SK-N-SH (cell line): ENCODE measurements at regions of chr5 and their contacts with region 1.

Region 1: GRCh38 chr5:34898258-34898895 is 16.9 kb downstream of the RAD1 start:
- DNase-seq: peak; percentile 53
- H3K4me3 ChIP-seq: no peak overlapping the region; a peak in 1 of 4 replicates
- H3K27ac ChIP-seq: 0 out of 4 replicates have a peak overlapping the region, but pooled peaks of 1 of the 2 experiments have one; percentile 15
- H3K4me1 ChIP-seq: 0 out of 4 replicates have a peak, but pooled peaks cover 0 to 7% of the 10 kb centered on the region in 2 experiments
- H3K27me3 ChIP-seq: no peaks in the 10 kb centered on the region
- CTCF ChIP-seq: peak; percentile 88
- EP300 ChIP-seq: no peak
- RAD21 ChIP-seq: peak; percentile 85

Region 2: GRCh38 chr5:34474573-34475021 is 423.8 kb before region 1 on chr5:
- CTCF ChIA-PET with region 1: interaction called, 18 read pairs
- POLR2A ChIA-PET with region 1: no interaction called
- DNase-seq: peak; percentile 53
- H3K4me3 ChIP-seq: no peak overlapping the region
- H3K27ac ChIP-seq: no peak overlapping the region
- H3K4me1 ChIP-seq: no peaks in the 10 kb centered on the region
- H3K27me3 ChIP-seq: no peaks in the 10 kb centered on the region
- CTCF ChIP-seq: peak; percentile 98
- EP300 ChIP-seq: no peak
- RAD21 ChIP-seq: peak; percentile 81

Region 3: GRCh38 chr5:34486160-34486848 is 412.1 kb before region 1 on chr5:
- CTCF ChIA-PET with region 1: interaction called, 40 read pairs
- POLR2A ChIA-PET with region 1: no interaction called
- DNase-seq: peak; percentile 70
- H3K4me3 ChIP-seq: peak overlapping the region in 1 of 2 experiments; percentile 33; a peak in 1 of 4 replicates
- H3K27ac ChIP-seq: peak overlapping the region in 1 of 2 experiments; percentile 97; a peak in 2 of 4 replicates
- H3K4me1 ChIP-seq: peaks cover 0 to 21% of the 10 kb centered on the region in 2 experiments
- H3K27me3 ChIP-seq: no peaks in the 10 kb centered on the region
- CTCF ChIP-seq: peak; percentile 90
- EP300 ChIP-seq: no peak
- RAD21 ChIP-seq: peak; percentile 84

Region 4: DNA sequence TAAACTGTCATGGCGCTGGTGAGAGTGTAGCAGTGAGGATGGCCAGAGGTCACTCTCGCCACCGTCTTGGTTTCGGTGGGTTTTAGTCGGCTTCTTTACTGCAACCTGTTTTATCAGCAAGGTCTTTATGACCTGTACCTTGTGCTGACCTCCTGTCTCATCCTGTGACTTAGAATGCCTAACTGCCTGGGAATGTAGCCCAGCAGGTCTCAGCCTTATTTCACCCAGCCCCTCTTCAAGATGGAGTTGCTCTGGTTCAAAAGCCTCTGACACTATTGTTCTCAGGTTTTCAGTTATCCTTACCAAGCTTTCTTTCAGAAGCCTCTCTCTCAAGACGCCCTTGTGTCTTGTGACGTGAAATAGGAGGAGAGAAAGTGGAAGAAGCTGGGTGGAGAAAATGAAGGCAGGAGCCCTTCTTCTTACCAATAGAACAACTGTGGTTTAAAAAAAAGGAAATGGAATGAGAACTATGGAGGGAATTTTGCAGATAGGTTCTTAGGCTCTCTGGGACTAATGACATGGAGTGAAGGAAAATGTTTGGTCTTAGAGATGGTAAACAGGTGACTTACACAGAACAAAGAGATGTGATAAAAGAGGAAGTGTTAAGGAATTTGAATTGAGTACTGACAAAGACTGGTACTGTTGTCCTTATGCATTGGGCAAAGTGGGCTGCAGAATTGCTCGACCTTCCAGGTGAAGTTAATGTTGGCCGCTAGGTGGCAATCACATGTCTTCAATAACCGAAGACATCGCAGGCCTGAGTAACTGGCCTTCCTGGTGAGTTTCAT is 375.6 kb before region 1 on chr5:
- CTCF ChIA-PET with region 1: interaction called, 87 read pairs
- POLR2A ChIA-PET with region 1: no interaction called
- DNase-seq: peak; percentile 64
- H3K4me3 ChIP-seq: peak overlapping the region in 1 of 2 experiments; percentile 29; a peak in 1 of 4 replicates
- H3K27ac ChIP-seq: peak overlapping the region in 1 of 2 experiments; percentile 79; a peak in 3 of 4 replicates
- H3K4me1 ChIP-seq: peaks cover 0 to 17% of the 10 kb centered on the region in 2 experiments; a peak in 2 of 4 replicates
- H3K27me3 ChIP-seq: no peaks in the 10 kb centered on the region
- CTCF ChIP-seq: peak; percentile 83
- EP300 ChIP-seq: no peak
- RAD21 ChIP-seq: peak; percentile 85

Region 5: DNA sequence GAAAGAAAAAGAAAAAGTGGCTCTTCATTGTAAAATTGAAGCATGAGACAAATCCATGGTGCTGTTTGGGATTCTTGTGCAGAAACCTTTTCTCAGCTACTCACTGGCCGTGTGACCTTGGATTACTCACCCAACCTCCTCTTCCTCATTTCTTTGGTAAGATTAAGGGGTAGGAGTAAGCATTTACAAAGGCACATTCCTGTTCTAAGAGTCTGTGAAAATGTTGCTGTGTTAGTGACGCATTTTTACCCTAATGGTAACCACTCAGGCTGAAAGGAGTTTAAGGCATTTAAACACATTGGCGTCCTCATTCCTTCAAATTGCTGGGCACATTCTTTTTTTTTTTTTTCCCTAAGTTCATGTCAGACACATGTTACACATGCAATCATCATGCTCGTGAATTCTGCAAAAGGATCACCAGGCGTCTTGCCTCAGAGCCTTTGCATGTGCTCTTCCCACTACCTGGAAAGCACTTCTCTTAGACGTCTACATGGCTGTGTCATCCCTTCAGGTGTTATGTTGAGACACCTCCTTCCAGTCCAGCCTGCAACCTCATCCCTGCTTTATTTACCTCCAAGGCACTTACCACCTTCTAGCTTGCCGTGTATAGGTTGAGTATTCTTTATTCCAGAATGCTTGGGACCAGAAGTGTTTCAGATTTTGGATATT is 237.8 kb before region 1 on chr5:
- CTCF ChIA-PET with region 1: no interaction called
- POLR2A ChIA-PET with region 1: no interaction called
- DNase-seq: no peak
- H3K4me3 ChIP-seq: no peak overlapping the region
- H3K27ac ChIP-seq: peak overlapping the region in 1 of 2 experiments; percentile 97; a peak in 2 of 4 replicates
- H3K4me1 ChIP-seq: peaks cover 3 to 9% of the 10 kb centered on the region in 2 experiments; a peak in 1 of 4 replicates
- H3K27me3 ChIP-seq: no peaks in the 10 kb centered on the region
- CTCF ChIP-seq: no peak
- EP300 ChIP-seq: no peak
- RAD21 ChIP-seq: no peak

Region 6: DNA sequence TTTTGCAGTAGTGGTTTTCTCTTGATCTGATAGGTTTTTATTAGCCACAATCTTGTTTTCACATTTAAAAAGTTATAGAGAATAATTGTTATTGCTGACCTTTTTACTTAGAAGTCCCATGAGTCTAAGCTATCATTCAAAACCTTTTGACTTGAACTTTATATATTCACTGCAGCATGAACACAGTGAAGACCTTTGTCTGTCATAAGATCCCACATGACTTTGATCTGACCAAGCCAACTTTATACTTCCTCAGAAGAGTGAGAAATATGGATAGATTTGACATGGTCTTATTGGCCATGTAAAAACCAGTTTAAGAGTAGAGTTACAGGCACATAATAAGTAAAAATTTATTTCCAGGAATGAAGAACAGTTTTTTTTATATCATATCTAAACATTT is 17.1 kb before region 1 on chr5:
- CTCF ChIA-PET with region 1: interaction called, 18 read pairs
- POLR2A ChIA-PET with region 1: no interaction called
- DNase-seq: no peak
- H3K4me3 ChIP-seq: no peak overlapping the region
- H3K27ac ChIP-seq: no peak overlapping the region
- H3K4me1 ChIP-seq: no peaks in the 10 kb centered on the region
- H3K27me3 ChIP-seq: no peaks in the 10 kb centered on the region
- CTCF ChIP-seq: no peak
- EP300 ChIP-seq: no peak
- RAD21 ChIP-seq: no peak

Region 7: GRCh38 chr5:34915139-34915855 is 16.9 kb after region 1 on chr5 and contains the starts of genes BRIX1 and RAD1:
- CTCF ChIA-PET with region 1: interaction called, 14 read pairs
- POLR2A ChIA-PET with region 1: interaction called, 9 read pairs
- DNase-seq: peak; percentile 90
- H3K4me3 ChIP-seq: peak within 1 kb of the TSS; percentile 96 to 100
- H3K27ac ChIP-seq: peak within 1 kb of the TSS; percentile 83 to 92
- H3K4me1 ChIP-seq: peaks cover 12 to 16% of the 10 kb centered on the region in 2 experiments
- H3K27me3 ChIP-seq: no peaks in the 10 kb centered on the region
- CTCF ChIP-seq: no peak
- EP300 ChIP-seq: peak in 1 of 2 experiments; percentile 55; a peak in 1 of 4 replicates
- RAD21 ChIP-seq: no peak
- polyA plus RNA-seq, gene BRIX1: 18.4 and 22.9 TPM in 2 replicates
- polyA plus RNA-seq, gene RAD1: 18.2 and 21.2 TPM in 2 replicates

Region 8: GRCh38 chr5:35436410-35437057 is 538.2 kb after region 1 on chr5:
- CTCF ChIA-PET with region 1: no interaction called
- POLR2A ChIA-PET with region 1: no interaction called
- DNase-seq: peak; percentile 23
- H3K4me3 ChIP-seq: no peak overlapping the region
- H3K27ac ChIP-seq: no peak overlapping the region
- H3K4me1 ChIP-seq: no peaks in the 10 kb centered on the region
- H3K27me3 ChIP-seq: 0 out of 2 replicates have a peak, but pooled peaks cover 6% of the 10 kb centered on the region
- CTCF ChIP-seq: peak; percentile 65
- EP300 ChIP-seq: no peak
- RAD21 ChIP-seq: peak; percentile 52